Activated CD4-positive, alpha-beta memory T cell treated with anti-CD3 and anti-CD28 coated beads for 36 hours (primary cell): ENCODE measurements at regions of chr7 and their contacts with region 1.

Region 1: DNA sequence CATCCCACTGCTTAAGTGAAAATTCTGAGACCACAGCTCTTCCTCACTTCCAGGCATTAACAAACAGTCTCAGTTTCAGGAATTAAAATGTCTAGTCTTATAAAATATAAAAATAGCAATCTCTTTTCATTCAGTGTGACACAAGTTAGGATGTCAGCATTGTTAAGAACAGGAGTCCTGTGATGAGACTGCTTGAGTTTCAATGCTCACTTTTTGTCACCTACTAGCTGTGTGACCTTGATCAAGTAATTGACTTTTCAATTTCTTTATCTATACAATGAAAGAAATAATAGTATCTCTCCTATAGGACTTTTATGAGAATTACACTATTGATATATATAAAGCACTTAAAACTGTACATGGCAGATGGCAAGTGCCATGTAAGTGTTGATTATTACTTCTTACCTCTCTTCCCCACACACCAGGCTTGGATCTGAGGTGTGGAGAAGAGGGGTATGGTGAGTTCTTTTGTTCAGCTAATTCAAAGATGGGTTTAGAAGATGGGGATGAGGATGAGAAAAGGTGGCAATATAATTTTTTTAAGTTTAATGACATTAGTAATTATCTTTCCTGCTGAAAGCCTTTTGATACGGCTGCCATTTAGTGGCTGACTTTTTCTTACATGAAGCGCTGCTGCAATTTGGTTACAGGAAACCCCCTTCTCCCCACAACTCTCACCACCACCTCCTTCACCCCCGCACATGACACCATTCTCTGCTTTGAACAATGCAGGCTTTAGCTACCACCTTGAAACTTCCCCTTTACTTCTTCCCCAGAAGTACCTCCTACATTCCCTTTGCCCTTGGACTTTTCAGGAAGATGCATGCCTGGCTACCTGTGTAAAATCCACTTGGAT is 20.8 kb upstream of the HYAL4 start:
- DNase-seq: peak; percentile 81
- H3K4me3 Mint-ChIP-seq: no peak overlapping the region
- H3K27ac Mint-ChIP-seq: no peak overlapping the region
- H3K4me1 Mint-ChIP-seq: peaks cover 18% of the 10 kb centered on the region
- H3K27me3 Mint-ChIP-seq: peaks cover 12% of the 10 kb centered on the region

Region 2: DNA sequence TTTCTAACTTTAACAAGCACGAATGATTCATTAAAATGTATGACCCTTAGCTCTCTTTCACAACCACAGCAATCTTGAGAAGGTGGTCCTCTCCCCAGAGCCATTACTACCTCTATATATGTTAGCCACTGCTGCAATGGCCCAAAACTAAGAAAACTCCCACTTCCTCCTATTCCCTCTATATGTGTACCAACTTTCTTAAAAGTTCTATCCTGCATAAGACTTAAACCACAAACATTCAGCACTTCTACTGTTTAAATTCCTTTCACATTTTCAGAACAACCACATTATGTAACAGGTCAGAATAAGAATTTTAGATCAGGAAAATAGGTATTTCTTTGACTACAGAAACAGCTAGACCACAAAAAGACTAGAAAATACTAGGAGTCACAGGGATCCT is 111.5 kb before region 1 on chr7:
- CTCF ChIA-PET with region 1: interaction called, 3 read pairs
- POLR2A ChIA-PET with region 1: no interaction called
- intact Hi-C with region 1: loop called (anchors 1 kb)
- DNase-seq: no peak
- H3K4me3 Mint-ChIP-seq: no peak overlapping the region
- H3K27ac Mint-ChIP-seq: no peak overlapping the region
- H3K4me1 Mint-ChIP-seq: peaks cover 58% of the 10 kb centered on the region
- H3K27me3 Mint-ChIP-seq: no peaks in the 10 kb centered on the region

Region 3: DNA sequence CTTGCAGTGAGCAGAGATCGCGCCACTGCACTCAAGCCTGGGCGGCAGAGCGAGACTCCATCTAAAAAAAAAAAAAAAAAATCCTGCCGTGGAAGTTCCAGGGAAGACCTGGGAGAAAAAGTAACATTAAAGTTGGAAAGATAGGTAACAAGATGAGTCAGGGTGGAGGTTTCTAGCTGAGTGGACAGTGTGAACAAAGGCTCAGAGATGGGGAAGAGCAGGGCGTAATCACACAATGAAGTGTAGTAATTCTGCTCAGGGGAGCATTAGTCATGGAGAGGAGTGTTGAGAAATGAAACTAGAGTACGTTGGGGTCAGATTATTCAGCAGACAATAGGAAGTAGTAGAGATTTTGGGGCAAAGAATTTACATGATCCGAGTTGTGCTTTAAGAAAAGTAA is 53.7 kb before region 1 on chr7:
- CTCF ChIA-PET with region 1: no interaction called
- POLR2A ChIA-PET with region 1: no interaction called
- intact Hi-C with region 1: loop called (anchors 1 kb)
- DNase-seq: peak; percentile 31
- H3K4me3 Mint-ChIP-seq: no peak overlapping the region
- H3K27ac Mint-ChIP-seq: no peak overlapping the region
- H3K4me1 Mint-ChIP-seq: peaks cover 12% of the 10 kb centered on the region
- H3K27me3 Mint-ChIP-seq: peaks cover 25% of the 10 kb centered on the region

Region 4: DNA sequence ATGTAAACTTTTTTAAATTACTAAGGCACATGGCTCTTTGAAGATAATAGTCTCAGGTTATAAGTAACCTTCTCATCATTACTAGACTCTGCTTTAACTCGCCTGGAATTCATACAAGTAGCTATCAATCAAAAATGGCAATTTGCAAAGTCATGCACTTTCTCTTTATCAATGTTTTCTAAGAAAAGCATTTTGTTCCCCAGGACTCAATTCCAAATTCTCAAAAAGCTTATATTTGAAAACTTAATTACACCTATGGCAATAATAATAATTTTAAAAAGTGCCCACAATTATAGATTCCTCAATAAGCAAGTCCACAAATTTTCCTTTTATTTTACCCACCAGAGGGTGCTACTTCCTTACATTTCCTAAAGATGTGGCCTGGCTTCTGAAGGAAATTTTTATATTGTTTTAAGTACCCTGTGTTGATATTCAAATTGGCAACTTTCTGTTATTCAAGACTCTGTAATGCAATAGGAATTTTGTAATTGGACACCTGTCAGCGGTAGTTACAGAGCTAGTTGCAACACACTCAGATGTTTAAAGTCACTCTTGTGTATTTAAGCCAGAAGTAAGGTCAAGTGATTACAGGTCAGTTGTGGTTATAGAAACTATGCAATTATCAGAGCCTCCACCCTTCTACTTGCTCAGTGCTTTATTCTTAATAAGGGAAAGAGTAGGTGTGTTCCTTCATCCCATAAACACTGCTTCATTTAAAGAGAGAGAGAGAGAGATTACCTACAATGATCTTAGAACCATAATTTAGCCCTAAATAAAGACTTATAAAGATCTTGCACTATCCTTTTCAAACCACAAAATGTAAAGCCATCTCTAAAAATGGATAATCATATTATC is 26.2 kb before region 1 on chr7:
- CTCF ChIA-PET with region 1: interaction called, 7 read pairs
- POLR2A ChIA-PET with region 1: no interaction called
- intact Hi-C with region 1: loop called (anchors 1 kb)
- DNase-seq: no peak
- H3K4me3 Mint-ChIP-seq: no peak overlapping the region
- H3K27ac Mint-ChIP-seq: no peak overlapping the region
- H3K4me1 Mint-ChIP-seq: no peaks in the 10 kb centered on the region
- H3K27me3 Mint-ChIP-seq: peaks cover 2% of the 10 kb centered on the region